T-cell (primary cell): ENCODE measurements at regions of chr5 and their contacts with region 1.

Region 1: GRCh38 chr5:32276173-32276853 is 36.4 kb downstream of the MTMR12 start:
- DNase-seq: peak in 1 of 35 experiments; percentile 53
- ATAC-seq: peak in 2 of 4 experiments; percentile 52 to 88
- H3K4me3 ChIP-seq: no peak overlapping the region
- H3K4me3 Mint-ChIP-seq: no peak overlapping the region
- H3K27ac ChIP-seq: peak overlapping the region; percentile 35
- H3K27ac Mint-ChIP-seq: peak overlapping the region; percentile 17 to 74
- H3K4me1 ChIP-seq: peaks cover 2 to 25% of the 10 kb centered on the region in 2 experiments
- H3K4me1 Mint-ChIP-seq: peaks cover 33 to 53% (median 47%) of the 10 kb centered on the region in 3 donors
- H3K27me3 ChIP-seq: no peaks in the 10 kb centered on the region
- H3K27me3 Mint-ChIP-seq: no peaks in the 10 kb centered on the region

Region 2: DNA sequence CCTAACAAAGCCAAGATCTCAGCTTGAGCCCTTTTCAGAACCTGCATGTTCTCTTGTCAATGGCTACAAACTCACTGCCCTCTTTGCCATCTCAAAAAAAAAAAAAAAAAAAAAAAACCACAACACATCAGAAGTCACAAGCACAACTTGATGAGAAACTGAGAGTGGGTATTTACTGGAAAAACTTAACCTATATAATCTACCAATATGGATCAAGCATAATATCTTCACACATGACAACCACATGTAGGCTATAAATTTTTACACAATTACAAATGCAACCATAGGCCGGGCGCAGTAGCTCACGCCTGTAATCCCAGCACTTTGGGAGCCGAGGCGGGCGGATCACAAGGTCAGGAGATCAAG is 27.4 kb after region 1 on chr5:
- CTCF ChIA-PET with region 1: interaction called, 3 to 10 read pairs
- POLR2A ChIA-PET with region 1: interaction called, 4 to 5 read pairs
- DNase-seq: no peak
- ATAC-seq: no peak
- H3K4me3 ChIP-seq: no peak overlapping the region
- H3K4me3 Mint-ChIP-seq: no peak overlapping the region
- H3K27ac ChIP-seq: no peak overlapping the region
- H3K27ac Mint-ChIP-seq: no peak overlapping the region
- H3K4me1 ChIP-seq: peaks cover 4 to 12% of the 10 kb centered on the region in 2 experiments
- H3K4me1 Mint-ChIP-seq: peaks cover 74 to 84% (median 78%) of the 10 kb centered on the region in 3 donors
- H3K27me3 ChIP-seq: no peaks in the 10 kb centered on the region
- H3K27me3 Mint-ChIP-seq: no peaks in the 10 kb centered on the region

Region 3: GRCh38 chr5:32308946-32309345 is 32.6 kb after region 1 on chr5:
- CTCF ChIA-PET with region 1: interaction called, 3 to 10 read pairs
- POLR2A ChIA-PET with region 1: interaction called in 1 of 2 experiments, 10 read pairs
- DNase-seq: no peak
- ATAC-seq: no peak
- H3K4me3 ChIP-seq: no peak overlapping the region
- H3K4me3 Mint-ChIP-seq: no peak overlapping the region
- H3K27ac ChIP-seq: no peak overlapping the region
- H3K27ac Mint-ChIP-seq: no peak overlapping the region
- H3K4me1 ChIP-seq: peaks cover 18 to 32% of the 10 kb centered on the region in 2 experiments
- H3K4me1 Mint-ChIP-seq: peaks cover 67 to 72% (median 69%) of the 10 kb centered on the region in 3 donors
- H3K27me3 ChIP-seq: no peaks in the 10 kb centered on the region
- H3K27me3 Mint-ChIP-seq: no peaks in the 10 kb centered on the region